ENCODE measurements at regions of chr14 and their contacts with region 1.

Region 1: DNA sequence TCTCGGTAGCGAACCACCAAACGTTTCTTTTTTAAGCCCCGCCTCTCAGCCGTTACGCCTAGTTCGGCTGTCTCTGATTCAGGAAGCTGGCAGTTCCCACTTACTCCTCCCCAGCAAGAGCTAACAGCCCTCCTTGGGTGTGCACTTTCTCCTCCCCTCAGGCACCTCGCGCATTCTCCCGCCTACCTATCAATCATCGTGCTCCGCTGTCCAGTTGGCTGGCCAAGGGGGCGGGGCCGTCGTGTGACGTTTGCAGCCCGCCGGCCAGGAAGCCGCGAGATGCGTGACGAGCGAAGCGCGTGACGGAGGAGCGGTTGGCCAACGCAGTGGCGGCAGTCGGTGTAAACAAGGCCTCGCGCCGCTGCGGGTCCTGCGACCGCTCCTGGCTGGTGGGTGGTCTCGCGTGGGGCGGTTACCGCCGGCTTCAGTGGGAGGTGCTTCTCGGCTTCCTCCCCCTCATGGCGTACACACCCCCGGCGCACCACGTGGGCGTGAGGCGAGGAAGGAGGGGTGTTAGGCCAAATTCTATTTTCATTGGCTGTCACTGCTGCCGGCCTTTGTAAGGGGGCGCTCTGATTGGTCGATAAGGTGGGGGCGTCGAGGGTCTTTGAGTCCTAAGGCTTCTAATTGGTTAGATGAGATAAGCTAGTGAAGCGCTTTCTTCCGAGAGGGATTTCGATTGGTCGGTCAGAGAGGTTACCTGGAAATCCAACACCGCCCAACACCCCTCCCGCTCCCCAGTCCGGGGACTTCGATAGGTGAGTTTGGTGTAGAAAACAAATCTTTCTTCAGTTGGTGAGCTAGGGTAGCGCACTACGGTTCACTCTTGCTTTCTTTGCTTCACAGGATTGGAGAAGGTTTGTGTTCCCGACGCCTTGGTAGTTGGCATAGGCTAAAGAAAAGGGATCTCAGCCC is at the starts of genes DCAF11 and NRL:
- DNase-seq: peak; percentile 99 to 100
- ATAC-seq: peak; percentile 92 to 94
- H3K4me3 ChIP-seq: peak within 1 kb of the TSS; percentile 62
- H3K27ac ChIP-seq: peak within 1 kb of the TSS; percentile 95 to 96
- H3K4me1 ChIP-seq: peaks cover 11% of the 10 kb centered on the region; the same call in 1 of the 3 replicates
- CTCF ChIP-seq: no peak
- EP300 ChIP-seq: no peak
- POLR2A ChIP-seq: 0 out of 2 replicates have a peak, but pooled peaks have one; percentile 3
- RAD21 ChIP-seq: no peak
- polyA plus RNA-seq, gene DCAF11: 27.9 and 30.2 TPM in 2 replicates
- polyA plus RNA-seq, gene NRL: 0.86 and 0.97 TPM in 2 replicates

Region 2: DNA sequence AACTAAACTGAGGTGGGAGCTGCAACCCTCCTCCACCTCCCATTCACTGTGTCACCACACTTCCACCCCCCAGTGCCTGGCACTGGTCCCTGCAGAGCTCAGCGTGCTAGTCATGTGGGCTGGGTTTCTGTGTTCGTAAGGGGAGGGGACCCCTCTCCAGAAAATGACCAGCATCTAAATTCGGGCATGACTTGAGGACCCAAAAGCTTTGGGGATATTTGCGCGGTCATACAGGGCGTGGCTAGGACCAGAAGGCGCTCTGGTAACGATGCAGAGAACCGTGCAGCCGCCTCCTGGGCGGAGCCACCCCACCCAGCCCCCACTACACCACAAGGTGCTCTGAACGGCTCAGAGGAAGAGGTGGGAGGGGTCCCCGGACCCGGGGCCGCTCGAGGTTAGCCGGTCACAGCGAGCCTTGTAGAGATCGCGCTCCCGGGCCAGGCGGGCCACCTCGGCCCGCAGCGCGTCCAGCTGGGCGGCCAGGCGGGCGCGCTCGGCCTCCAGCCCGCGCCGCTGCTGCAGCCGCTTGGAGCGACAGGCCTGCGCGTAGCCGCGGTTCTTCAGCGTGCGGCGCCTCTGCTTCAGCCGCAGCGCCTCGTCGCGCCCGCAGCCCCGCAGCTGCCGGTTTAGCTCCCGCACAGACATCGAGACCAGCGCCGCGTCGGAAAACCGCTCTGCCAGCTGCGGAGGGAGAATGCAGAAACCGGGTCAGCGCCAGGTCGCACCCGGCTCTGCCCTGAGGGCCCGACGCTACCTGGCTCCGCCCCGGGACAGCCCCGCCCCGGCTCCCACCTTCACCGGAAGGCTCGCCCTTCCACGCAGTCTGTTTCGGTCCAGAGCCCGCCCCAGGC is 33.7 kb before region 1 on chr14:
- CTCF ChIA-PET with region 1: interaction called, 34 read pairs
- POLR2A ChIA-PET with region 1: interaction called, 13 read pairs
- DNase-seq: peak; percentile 28 to 67
- ATAC-seq: peak; percentile 88 to 90
- H3K4me3 ChIP-seq: peak overlapping the region; percentile 79
- H3K27ac ChIP-seq: peak overlapping the region; percentile 92 to 93
- H3K4me1 ChIP-seq: peaks cover 15% of the 10 kb centered on the region
- CTCF ChIP-seq: no peak
- EP300 ChIP-seq: no peak
- POLR2A ChIP-seq: peak; percentile 46
- RAD21 ChIP-seq: no peak

Region 3: DNA sequence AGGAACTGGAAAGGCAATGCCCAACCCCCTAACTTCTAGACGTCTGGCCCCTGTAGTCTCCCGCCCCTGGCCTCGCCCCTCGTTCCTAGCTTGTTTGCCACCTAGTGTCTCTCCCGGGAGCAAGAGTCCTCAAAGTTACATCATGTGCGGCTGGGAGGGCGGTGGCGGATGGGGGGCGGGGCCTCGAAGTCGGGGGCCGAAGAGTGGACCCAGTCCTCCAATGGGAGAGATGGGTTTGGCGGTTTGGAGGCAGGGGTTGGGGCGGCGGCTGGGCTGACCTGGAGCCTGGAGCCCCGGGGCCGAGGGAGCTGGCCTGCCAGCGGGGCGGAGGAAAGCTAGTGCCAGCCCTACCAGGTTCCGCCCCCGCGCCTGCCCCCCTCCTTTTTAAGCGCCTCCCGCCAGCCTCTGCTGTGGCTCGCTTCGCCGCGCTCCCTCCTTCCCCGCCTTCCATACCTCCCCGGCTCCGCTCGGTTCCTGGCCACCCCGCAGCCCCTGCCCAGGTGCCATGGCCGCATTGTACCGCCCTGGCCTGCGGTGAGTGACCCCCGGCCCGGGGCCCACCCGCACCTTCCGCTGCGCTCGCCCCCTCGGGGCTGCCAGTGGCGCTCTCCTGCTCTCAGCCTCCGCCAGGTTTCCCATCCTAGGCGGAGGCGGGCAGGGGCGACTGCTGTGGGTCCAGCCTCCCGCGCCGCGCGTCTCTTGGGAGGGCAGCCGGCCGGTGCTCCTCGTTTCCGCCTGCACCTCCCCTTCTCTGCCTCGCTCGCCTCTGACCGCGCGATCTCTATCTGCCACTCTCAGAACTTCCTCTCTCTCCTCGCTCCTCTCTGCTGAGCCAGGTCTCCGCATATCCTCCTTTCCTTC is 20.7 kb before region 1 on chr14 and contains the start of gene PCK2:
- CTCF ChIA-PET with region 1: interaction called, 225 read pairs
- POLR2A ChIA-PET with region 1: interaction called, 55 read pairs
- DNase-seq: peak; percentile 95 to 97
- ATAC-seq: peak; percentile 93 to 94
- H3K4me3 ChIP-seq: peak within 1 kb of the TSS; percentile 70
- H3K27ac ChIP-seq: peak within 1 kb of the TSS; percentile 95 to 100
- H3K4me1 ChIP-seq: peaks cover 18% of the 10 kb centered on the region
- CTCF ChIP-seq: no peak
- EP300 ChIP-seq: no peak
- POLR2A ChIP-seq: peak; percentile 95
- RAD21 ChIP-seq: no peak
- polyA plus RNA-seq, gene PCK2: 52.1 and 60.2 TPM in 2 replicates

Region 4: GRCh38 chr14:24135834-24136542 is 21.2 kb after region 1 on chr14 and contains the start of gene PSME1:
- CTCF ChIA-PET with region 1: interaction called, 7 read pairs
- POLR2A ChIA-PET with region 1: interaction called, 48 read pairs
- DNase-seq: peak; percentile 81 to 86
- ATAC-seq: peak; percentile 82 to 92
- H3K4me3 ChIP-seq: peak within 1 kb of the TSS; percentile 88
- H3K27ac ChIP-seq: peak within 1 kb of the TSS; percentile 96 to 98
- H3K4me1 ChIP-seq: peaks cover 32% of the 10 kb centered on the region
- CTCF ChIP-seq: no peak
- EP300 ChIP-seq: no peak
- POLR2A ChIP-seq: peak; percentile 41
- RAD21 ChIP-seq: no peak
- polyA plus RNA-seq, gene PSME1: 77.3 and 83.6 TPM in 2 replicates

Region 5: DNA sequence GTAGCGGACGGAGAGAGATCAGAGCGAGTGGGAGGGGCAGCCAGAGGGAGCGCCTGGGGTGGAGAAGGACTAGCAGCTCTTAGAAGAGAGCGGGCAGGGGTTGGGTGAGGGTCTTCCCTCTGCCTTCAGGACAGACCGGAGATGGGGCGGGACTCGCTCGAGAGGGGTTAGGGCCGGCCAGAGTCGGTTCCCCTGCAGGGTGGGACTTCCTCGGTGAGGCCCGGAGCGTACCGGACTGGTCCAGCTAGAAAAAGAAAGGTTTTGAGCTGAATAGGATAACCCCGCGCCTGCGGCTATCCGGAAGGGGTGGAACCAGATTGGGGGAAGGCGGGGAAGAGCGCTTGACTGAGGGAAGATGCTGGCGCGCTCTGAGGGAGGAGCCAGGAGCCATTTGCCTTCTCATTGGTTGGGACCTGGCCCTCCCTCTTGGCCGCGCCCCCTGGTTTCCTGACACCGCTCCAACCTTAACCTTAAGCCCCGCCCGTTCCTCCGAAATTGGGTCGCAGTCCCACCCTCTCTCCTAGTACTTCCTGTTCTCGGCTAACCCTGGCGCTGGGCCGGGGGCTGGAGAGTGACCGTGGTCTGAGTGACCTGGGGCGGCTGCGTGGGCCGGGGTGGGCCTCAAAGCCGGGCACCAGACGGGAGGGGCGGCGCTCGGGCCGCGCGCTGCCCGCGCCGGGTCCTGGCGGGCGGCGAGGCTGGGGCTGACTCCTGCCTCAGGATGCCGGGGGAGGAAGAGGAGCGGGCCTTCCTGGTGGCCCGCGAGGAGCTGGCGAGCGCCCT is 32.4 kb after region 1 on chr14 and contains the start of gene RNF31:
- CTCF ChIA-PET with region 1: interaction called, 4 read pairs
- POLR2A ChIA-PET with region 1: interaction called, 18 read pairs
- DNase-seq: peak; percentile 94 to 98
- ATAC-seq: peak; percentile 89 to 94
- H3K4me3 ChIP-seq: peak within 1 kb of the TSS; percentile 89
- H3K27ac ChIP-seq: peak within 1 kb of the TSS; percentile 91 to 98
- H3K4me1 ChIP-seq: peaks cover 16% of the 10 kb centered on the region
- CTCF ChIP-seq: no peak
- EP300 ChIP-seq: no peak
- POLR2A ChIP-seq: peak; percentile 42; the same call in 1 of the 2 replicates
- RAD21 ChIP-seq: no peak
- polyA plus RNA-seq, gene RNF31: 5.7 and 19.1 TPM in 2 replicates

Region 6: DNA sequence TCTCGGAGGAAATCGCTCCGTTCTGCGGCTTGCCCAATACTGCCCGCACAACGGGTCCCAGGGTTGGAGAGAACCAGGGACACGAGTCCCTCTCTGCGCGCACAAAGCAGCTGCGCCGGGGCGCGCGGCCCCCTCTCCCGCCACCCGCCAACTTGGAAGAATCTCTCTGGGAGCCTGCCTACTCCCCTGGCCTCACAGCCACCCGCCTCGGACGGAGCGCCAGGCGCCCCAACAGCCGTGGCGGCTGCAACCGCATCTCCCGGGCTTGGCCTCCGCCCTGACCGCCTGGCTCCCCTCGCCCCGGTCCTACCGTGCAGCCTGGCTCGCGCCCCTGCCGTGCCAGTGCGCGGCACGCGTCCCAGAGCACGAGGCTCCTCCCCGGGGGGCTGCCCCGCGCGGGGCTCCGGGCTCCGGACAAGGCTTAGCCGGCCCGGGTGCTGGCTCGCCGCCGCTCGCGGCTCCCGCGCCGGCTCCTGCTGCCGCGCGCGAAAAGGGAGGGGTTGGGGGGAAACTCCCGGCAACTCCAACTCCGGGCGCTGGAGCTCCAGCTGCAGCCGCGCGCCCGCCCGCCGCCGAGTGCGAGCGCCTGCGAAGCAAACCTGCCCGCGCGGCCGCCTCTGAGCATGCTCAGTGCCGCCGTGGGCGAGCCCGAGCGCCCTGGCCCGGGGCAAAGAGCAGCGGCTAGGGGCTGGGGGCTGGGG is 934.9 kb after region 1 on chr14 and contains the start of gene STXBP6:
- CTCF ChIA-PET with region 1: no interaction called
- POLR2A ChIA-PET with region 1: no interaction called
- DNase-seq: peak; percentile 11 to 35
- ATAC-seq: peak; percentile 83 to 95
- H3K4me3 ChIP-seq: peak within 1 kb of the TSS; percentile 68
- H3K27ac ChIP-seq: peak within 1 kb of the TSS; percentile 61 to 84
- H3K4me1 ChIP-seq: peaks cover 7% of the 10 kb centered on the region; the same call in 1 of the 3 replicates
- CTCF ChIP-seq: no peak
- EP300 ChIP-seq: no peak
- POLR2A ChIP-seq: no peak
- RAD21 ChIP-seq: no peak
- polyA plus RNA-seq, gene STXBP6: 4.6 and 6.3 TPM in 2 replicates

Measured in A549 (cell line).